ENCODE measurements at regions of chr4 and their contacts with region 1.

Region 1: DNA sequence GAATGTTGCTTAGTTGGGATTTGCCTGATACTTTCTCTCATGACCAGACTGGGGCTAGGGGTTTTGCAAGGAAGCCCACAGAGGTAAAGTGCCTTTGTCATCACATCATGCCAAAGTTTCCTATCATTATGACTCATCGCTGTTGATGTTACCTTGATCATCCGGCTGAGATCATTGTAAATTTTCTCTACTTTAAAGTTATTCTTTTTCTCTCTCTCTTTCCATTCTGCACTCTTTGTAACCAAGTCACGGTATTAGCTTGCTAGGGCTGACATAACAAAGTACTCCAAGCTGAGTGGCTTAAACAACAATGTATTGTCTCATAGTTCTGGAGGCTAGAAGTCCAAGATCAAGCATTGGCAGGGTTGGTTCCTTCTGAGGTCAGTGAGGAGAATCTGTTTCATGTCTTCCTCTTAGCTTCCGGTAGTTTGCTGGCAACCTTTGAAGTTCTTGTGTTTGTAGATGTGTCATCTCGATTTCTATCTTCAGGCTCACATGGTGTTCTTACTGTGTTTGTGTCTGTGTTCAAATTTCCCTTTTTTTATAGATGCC is 113.0 kb downstream of the DTHD1 start:
- DNase-seq: peak; percentile 60
- H3K4me3 Mint-ChIP-seq: peak overlapping the region; percentile 48
- H3K27ac Mint-ChIP-seq: peak overlapping the region; percentile 94
- H3K4me1 Mint-ChIP-seq: peaks cover 23% of the 10 kb centered on the region
- H3K27me3 Mint-ChIP-seq: peaks cover 2% of the 10 kb centered on the region

Region 2: GRCh38 chr4:36081185-36081584 is 313.2 kb before region 1 on chr4:
- CTCF ChIA-PET with region 1: no interaction called
- POLR2A ChIA-PET with region 1: no interaction called
- intact Hi-C with region 1: loop called (anchors 1 kb)
- DNase-seq: peak; percentile 37
- H3K4me3 Mint-ChIP-seq: no peak overlapping the region
- H3K27ac Mint-ChIP-seq: no peak overlapping the region
- H3K4me1 Mint-ChIP-seq: peaks cover 7% of the 10 kb centered on the region
- H3K27me3 Mint-ChIP-seq: no peaks in the 10 kb centered on the region

Region 3: GRCh38 chr4:36255577-36255976 is 138.9 kb before region 1 on chr4:
- CTCF ChIA-PET with region 1: interaction called, 34 read pairs
- POLR2A ChIA-PET with region 1: no interaction called
- intact Hi-C with region 1: loop called (anchors 1 kb)
- DNase-seq: peak; percentile 75
- H3K4me3 Mint-ChIP-seq: peak overlapping the region; percentile 65
- H3K27ac Mint-ChIP-seq: peak overlapping the region; percentile 95
- H3K4me1 Mint-ChIP-seq: peaks cover 44% of the 10 kb centered on the region
- H3K27me3 Mint-ChIP-seq: no peaks in the 10 kb centered on the region

Region 4: GRCh38 chr4:36320117-36320896 is 74.1 kb before region 1 on chr4:
- CTCF ChIA-PET with region 1: interaction called, 16 read pairs
- POLR2A ChIA-PET with region 1: no interaction called
- intact Hi-C with region 1: loop called (anchors 1 kb)
- DNase-seq: no peak
- H3K4me3 Mint-ChIP-seq: no peak overlapping the region
- H3K27ac Mint-ChIP-seq: peak overlapping the region; percentile 67
- H3K4me1 Mint-ChIP-seq: peaks cover 79% of the 10 kb centered on the region
- H3K27me3 Mint-ChIP-seq: no peaks in the 10 kb centered on the region

Region 5: GRCh38 chr4:36551697-36552214 is 157.3 kb after region 1 on chr4:
- CTCF ChIA-PET with region 1: no interaction called
- POLR2A ChIA-PET with region 1: no interaction called
- intact Hi-C with region 1: loop called (anchors 1 kb)
- DNase-seq: peak; percentile 60
- H3K4me3 Mint-ChIP-seq: no peak overlapping the region
- H3K27ac Mint-ChIP-seq: peak overlapping the region; percentile 53
- H3K4me1 Mint-ChIP-seq: peaks cover 7% of the 10 kb centered on the region
- H3K27me3 Mint-ChIP-seq: peaks cover 2% of the 10 kb centered on the region